Endothelial cell of umbilical vein (primary cell): ENCODE measurements at regions of chr9 and their contacts with region 1.

Region 1: DNA sequence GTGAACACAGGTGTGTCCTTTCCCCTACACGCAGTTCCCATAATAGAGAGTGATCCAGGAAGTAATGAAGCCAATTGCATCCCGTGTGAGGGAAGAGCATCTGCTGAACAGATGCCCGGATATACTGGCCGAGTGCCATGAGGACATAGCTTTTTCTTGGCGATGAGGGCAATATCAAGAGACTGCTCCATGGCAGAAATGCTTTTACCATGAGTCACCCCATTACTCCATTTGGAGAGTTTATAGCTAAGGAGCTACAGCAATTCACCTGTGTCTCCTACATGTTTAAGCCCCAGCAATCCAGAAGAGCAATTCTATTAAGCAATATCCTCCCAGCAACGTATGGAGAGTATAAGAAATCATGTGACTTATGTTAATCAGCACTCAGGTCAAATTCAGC is 222.0 kb upstream of the KLF4 start:
- DNase-seq: peak; percentile 80
- H3K4me3 ChIP-seq: no peak overlapping the region
- H3K27ac ChIP-seq: no peak overlapping the region
- H3K4me1 ChIP-seq: peaks cover 16% of the 10 kb centered on the region
- H3K27me3 ChIP-seq: peaks cover 14 to 26% of the 10 kb centered on the region in 2 experiments
- CTCF ChIP-seq: no peak
- POLR2A ChIP-seq: no peak

Region 2: DNA sequence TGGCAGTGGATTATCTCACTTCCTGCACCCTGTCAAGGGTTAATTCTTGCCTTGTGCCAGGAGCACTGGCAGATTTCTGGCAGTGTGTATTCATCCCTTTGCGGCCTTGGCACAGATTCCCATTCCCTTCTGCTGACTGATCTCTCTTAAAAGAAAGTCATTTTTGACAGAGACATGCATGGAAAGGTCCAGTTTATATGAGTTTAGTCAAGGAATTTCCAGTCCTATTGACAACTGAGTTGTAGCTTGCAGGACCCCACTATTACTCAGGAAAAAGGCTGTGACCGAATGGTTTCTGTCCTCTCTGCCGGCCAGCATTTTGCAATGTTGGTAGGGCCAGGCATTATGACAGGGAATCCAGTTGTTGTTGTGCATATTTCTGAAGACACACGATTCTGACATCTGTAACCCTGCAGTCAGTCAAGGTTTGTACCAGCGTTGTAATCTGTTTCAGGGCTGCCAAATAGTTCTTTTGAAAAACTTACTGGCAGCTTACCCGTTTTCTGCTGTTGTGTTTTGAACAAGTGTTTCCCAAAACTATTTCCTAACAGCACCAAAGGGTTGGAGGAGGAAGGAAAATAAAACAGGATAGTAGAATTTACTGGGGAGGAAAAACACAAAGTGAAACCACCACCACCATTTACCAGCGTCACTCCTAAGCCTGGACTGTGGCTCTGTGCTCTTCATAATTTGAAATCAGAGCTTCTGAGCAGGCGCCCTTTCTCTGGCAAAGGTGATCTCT is 21.4 kb after region 1 on chr9:
- CTCF ChIA-PET with region 1: interaction called, 5 read pairs
- POLR2A ChIA-PET with region 1: no interaction called
- dilution Hi-C with region 1: no loop called
- intact Hi-C with region 1: loop called (anchors 2 kb)
- DNase-seq: peak; percentile 71
- H3K4me3 ChIP-seq: peak overlapping the region in 1 of 3 experiments; percentile 5
- H3K27ac ChIP-seq: peak overlapping the region; percentile 20
- H3K4me1 ChIP-seq: peaks cover 15% of the 10 kb centered on the region
- H3K27me3 ChIP-seq: no peaks in the 10 kb centered on the region
- CTCF ChIP-seq: no peak
- POLR2A ChIP-seq: no peak

Region 3: DNA sequence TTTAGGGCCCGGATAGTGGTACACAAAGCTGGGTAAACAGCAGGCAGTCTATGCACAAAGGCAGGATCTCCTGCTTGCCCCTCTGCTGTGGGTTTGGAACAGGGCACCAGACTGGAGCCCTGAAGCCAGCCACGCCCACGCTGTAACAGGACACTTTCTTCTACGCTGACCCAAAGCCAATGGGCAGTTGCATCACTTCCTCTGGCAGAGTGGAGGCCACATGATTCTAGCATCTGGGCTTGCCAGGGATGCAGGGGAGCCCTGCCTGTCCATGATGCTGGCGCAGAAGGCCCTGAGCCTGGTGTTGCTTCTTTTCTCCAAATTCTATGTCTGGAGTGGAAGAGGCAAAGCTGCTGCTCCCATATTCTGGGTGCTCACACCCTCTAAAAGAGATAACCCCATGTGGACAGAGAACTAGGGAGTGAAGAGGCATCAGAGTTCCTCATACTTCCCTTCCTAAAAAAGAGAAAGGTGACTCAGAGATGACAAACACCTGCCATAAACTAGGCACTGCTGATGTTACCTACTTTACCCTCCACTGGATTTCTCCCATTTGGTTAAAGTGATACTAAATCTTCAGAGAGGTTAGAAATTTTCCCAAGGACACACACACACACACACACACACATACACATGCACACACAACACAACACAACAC is 38.4 kb after region 1 on chr9:
- CTCF ChIA-PET with region 1: interaction called, 6 read pairs
- POLR2A ChIA-PET with region 1: interaction called, 3 read pairs
- dilution Hi-C with region 1: no loop called
- intact Hi-C with region 1: loop called (anchors 1 kb)
- DNase-seq: peak; percentile 84
- H3K4me3 ChIP-seq: no peak overlapping the region
- H3K27ac ChIP-seq: peak overlapping the region; percentile 60
- H3K4me1 ChIP-seq: peaks cover 46% of the 10 kb centered on the region
- H3K27me3 ChIP-seq: no peaks in the 10 kb centered on the region
- CTCF ChIP-seq: no peak
- POLR2A ChIP-seq: peak; percentile 7

Region 4: GRCh38 chr9:107761307-107761706 is 49.8 kb after region 1 on chr9:
- CTCF ChIA-PET with region 1: no interaction called
- POLR2A ChIA-PET with region 1: no interaction called
- dilution Hi-C with region 1: no loop called
- intact Hi-C with region 1: no loop called
- DNase-seq: no peak
- H3K4me3 ChIP-seq: no peak overlapping the region
- H3K27ac ChIP-seq: no peak overlapping the region
- H3K4me1 ChIP-seq: peaks cover 1% of the 10 kb centered on the region
- H3K27me3 ChIP-seq: no peaks in the 10 kb centered on the region
- CTCF ChIP-seq: no peak
- POLR2A ChIP-seq: no peak

Region 5: GRCh38 chr9:107905308-107906020 is 193.9 kb after region 1 on chr9:
- CTCF ChIA-PET with region 1: no interaction called
- POLR2A ChIA-PET with region 1: no interaction called
- dilution Hi-C with region 1: no loop called
- intact Hi-C with region 1: no loop called
- DNase-seq: no peak
- H3K4me3 ChIP-seq: no peak overlapping the region
- H3K27ac ChIP-seq: no peak overlapping the region
- H3K4me1 ChIP-seq: no peaks in the 10 kb centered on the region
- H3K27me3 ChIP-seq: no peaks in the 10 kb centered on the region
- CTCF ChIP-seq: no peak
- POLR2A ChIP-seq: no peak

Region 6: GRCh38 chr9:108142504-108143201 is 431.1 kb after region 1 on chr9:
- CTCF ChIA-PET with region 1: no interaction called
- POLR2A ChIA-PET with region 1: no interaction called
- dilution Hi-C with region 1: no loop called
- intact Hi-C with region 1: loop called (anchors 10 kb)
- DNase-seq: peak; percentile 89
- H3K4me3 ChIP-seq: no peak overlapping the region
- H3K27ac ChIP-seq: peak overlapping the region; percentile 19
- H3K4me1 ChIP-seq: peaks cover 20% of the 10 kb centered on the region
- H3K27me3 ChIP-seq: no peaks in the 10 kb centered on the region
- CTCF ChIP-seq: peak; percentile 3 to 26
- POLR2A ChIP-seq: no peak